GM10248 (cell line): ENCODE measurements at regions of chr19 and their contacts with region 1.

Region 1: DNA sequence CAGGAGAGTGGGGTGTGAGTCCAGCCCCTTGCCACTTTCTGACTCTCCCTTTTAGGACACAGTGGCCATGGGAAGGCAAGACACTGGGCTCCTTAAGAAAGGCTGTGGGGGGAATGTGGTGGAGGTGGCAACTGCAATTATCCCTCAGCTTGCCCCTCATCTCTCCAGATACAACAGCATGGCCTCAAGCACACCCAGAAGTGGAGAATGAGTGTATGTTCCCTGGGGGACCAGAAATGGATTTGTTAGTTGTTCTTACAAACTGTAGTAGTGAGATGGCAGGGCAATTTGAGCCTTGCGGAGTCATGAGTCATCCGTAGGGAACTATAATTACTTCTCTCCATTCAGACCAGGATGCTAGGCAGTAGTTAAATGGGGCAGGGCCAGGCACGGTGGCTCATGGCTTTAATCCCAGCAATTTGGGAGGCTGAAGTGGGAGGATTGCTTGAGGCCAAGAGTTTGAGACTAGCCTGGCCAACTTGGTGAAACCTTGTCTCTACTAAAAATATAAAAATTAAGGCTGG is 25.6 kb upstream of the CXCL17 start:
- DNase-seq: no peak
- CTCF ChIP-seq: no peak

Region 2: DNA sequence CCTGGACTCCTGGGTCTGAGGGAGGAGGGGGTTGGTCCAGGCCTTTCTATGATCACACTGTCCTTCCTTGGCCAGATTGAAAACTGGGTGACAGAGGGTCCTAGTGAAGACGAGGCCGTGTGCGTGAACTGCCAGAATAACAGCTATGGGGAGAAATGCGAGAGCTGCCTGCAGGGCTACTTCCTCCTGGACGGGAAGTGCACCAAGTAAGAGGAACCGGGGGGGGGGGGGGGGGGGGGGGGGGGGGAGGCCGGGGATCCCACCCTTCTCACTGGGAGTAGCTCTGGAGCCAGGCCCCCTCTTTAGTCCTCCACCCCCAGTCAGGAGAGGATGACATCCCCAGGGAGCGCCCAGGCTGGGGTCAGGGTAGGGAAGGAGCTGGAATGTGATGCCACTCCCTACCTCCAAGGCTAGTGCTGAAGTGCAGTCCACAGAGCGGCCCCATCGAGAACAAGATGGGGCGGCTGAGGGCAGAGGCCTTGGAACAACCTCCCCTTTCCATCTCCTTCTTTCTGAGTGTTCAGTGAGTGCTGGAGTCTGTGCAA is 97.6 kb before region 1 on chr19:
- CTCF ChIA-PET with region 1: no interaction called
- POLR2A ChIA-PET with region 1: no interaction called
- DNase-seq: no peak
- CTCF ChIP-seq: no peak

Region 3: GRCh38 chr19:42409477-42409876 is 58.9 kb before region 1 on chr19:
- CTCF ChIA-PET with region 1: no interaction called
- POLR2A ChIA-PET with region 1: no interaction called
- DNase-seq: no peak
- CTCF ChIP-seq: no peak

Region 4: GRCh38 chr19:42450314-42450934 is 17.9 kb before region 1 on chr19:
- CTCF ChIA-PET with region 1: interaction called, 25 read pairs
- POLR2A ChIA-PET with region 1: no interaction called
- DNase-seq: peak; percentile 86
- CTCF ChIP-seq: peak; percentile 84

Region 5: GRCh38 chr19:42455621-42456081 is 12.7 kb before region 1 on chr19:
- CTCF ChIA-PET with region 1: interaction called, 25 read pairs
- POLR2A ChIA-PET with region 1: no interaction called
- DNase-seq: no peak
- CTCF ChIP-seq: no peak

Region 6: GRCh38 chr19:42480335-42481095 is 12.2 kb after region 1 on chr19:
- CTCF ChIA-PET with region 1: interaction called, 11 read pairs
- POLR2A ChIA-PET with region 1: no interaction called
- DNase-seq: no peak
- CTCF ChIP-seq: no peak

Region 7: GRCh38 chr19:42498169-42498757 is 29.9 kb after region 1 on chr19:
- CTCF ChIA-PET with region 1: interaction called, 12 read pairs
- POLR2A ChIA-PET with region 1: no interaction called
- DNase-seq: no peak
- CTCF ChIP-seq: no peak

Region 8: DNA sequence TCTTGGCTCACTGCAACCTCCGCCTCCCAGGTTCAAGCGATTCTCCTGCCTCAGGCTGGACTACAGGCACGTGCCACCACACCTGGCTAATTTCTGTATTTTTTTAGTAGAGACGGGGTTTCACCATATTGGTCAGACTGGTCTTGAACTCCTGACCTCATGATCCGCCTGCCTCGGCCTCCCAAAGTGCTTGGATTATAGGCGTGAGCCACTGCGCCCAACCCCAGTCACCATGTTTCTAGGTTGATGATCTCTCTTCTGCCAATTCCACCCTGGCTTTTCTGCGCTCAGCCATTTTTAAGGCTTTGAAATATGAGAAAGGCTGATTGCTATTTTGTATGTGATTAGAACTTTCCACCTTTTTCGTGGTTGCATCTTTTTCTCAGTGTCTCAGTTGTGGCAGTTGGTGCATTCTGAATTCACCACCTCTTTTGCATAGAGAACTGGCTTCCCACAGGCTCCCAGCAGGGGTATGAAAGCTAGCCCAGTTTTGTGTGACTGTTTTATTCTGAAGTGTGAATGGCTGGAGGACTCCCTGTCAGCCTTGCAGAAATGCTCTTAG is 44.5 kb after region 1 on chr19:
- CTCF ChIA-PET with region 1: interaction called, 14 read pairs
- POLR2A ChIA-PET with region 1: no interaction called
- DNase-seq: peak; percentile 70
- CTCF ChIP-seq: no peak

Region 9: GRCh38 chr19:42619271-42619670 is 150.9 kb after region 1 on chr19:
- CTCF ChIA-PET with region 1: no interaction called
- POLR2A ChIA-PET with region 1: no interaction called
- DNase-seq: no peak
- CTCF ChIP-seq: no peak